ENCODE measurements at regions of chr19 and their contacts with region 1.

Region 1: GRCh38 chr19:55482156-55482961 is 2.6 kb upstream of the NAT14 start:
- DNase-seq: no peak
- ATAC-seq: no peak
- H3K4me3 ChIP-seq: no peak overlapping the region
- H3K27ac ChIP-seq: no peak overlapping the region
- H3K4me1 ChIP-seq: peaks cover 46% of the 10 kb centered on the region
- H3K27me3 ChIP-seq: no peaks in the 10 kb centered on the region
- CTCF ChIP-seq: no peak

Region 2: GRCh38 chr19:55494172-55494761 is 11.9 kb after region 1 on chr19:
- CTCF ChIA-PET with region 1: interaction called, 3 read pairs
- POLR2A ChIA-PET with region 1: interaction called, 10 read pairs
- in situ Hi-C with region 1: no loop called
- intact Hi-C with region 1: no loop called
- DNase-seq: no peak
- ATAC-seq: 0 out of 2 replicates have a peak, but pooled peaks have one; percentile 5
- H3K4me3 ChIP-seq: no peak overlapping the region
- H3K27ac ChIP-seq: no peak overlapping the region
- H3K4me1 ChIP-seq: peaks cover 38% of the 10 kb centered on the region
- H3K27me3 ChIP-seq: no peaks in the 10 kb centered on the region
- CTCF ChIP-seq: no peak

Measured in Panc1 (cell line).